Cardiac septum (tissue), 1 donor: ENCODE measurements at regions of chr2 and their contacts with region 1.

Region 1: GRCh38 chr2:64228126-64228678 is 84.0 kb upstream of the PELI1 start:
- DNase-seq: peak; percentile 95

Region 2: GRCh38 chr2:64273524-64274398 is 45.6 kb after region 1 on chr2:
- intact Hi-C with region 1: loop called (anchors 5 kb)
- DNase-seq: no peak